WTC11 (cell line): ENCODE measurements at regions of chr12 and their contacts with region 1.

Region 1: GRCh38 chr12:50038336-50038735 is 13.0 kb upstream of the RACGAP1 start:
- DNase-seq: no peak
- ATAC-seq: no peak
- H3K4me3 Mint-ChIP-seq: no peak overlapping the region
- H3K27ac Mint-ChIP-seq: no peak overlapping the region
- H3K4me1 Mint-ChIP-seq: peaks cover 4% of the 10 kb centered on the region
- H3K27me3 Mint-ChIP-seq: peaks cover 7% of the 10 kb centered on the region; the same call in 1 of the 2 replicates
- CTCF ChIP-seq: no peak

Region 2: GRCh38 chr12:49609746-49610089 is 428.6 kb before region 1 on chr12:
- CTCF ChIA-PET with region 1: no interaction called
- POLR2A ChIA-PET with region 1: no interaction called
- DNase-seq: no peak
- ATAC-seq: peak; percentile 44
- H3K4me3 Mint-ChIP-seq: no peak overlapping the region
- H3K27ac Mint-ChIP-seq: no peak overlapping the region
- H3K4me1 Mint-ChIP-seq: 0 out of 2 replicates have a peak, but pooled peaks cover 2% of the 10 kb centered on the region
- H3K27me3 Mint-ChIP-seq: peaks cover 17% of the 10 kb centered on the region
- CTCF ChIP-seq: no peak

Region 3: GRCh38 chr12:49873361-49873934 is 164.9 kb before region 1 on chr12:
- CTCF ChIA-PET with region 1: no interaction called
- POLR2A ChIA-PET with region 1: no interaction called
- DNase-seq: no peak
- ATAC-seq: no peak
- H3K4me3 Mint-ChIP-seq: no peak overlapping the region
- H3K27ac Mint-ChIP-seq: no peak overlapping the region
- H3K4me1 Mint-ChIP-seq: no peaks in the 10 kb centered on the region
- H3K27me3 Mint-ChIP-seq: no peaks in the 10 kb centered on the region; the same call in 1 of the 2 replicates
- CTCF ChIP-seq: no peak

Region 4: GRCh38 chr12:49888461-49889151 is 149.7 kb before region 1 on chr12:
- CTCF ChIA-PET with region 1: no interaction called
- POLR2A ChIA-PET with region 1: no interaction called
- DNase-seq: no peak
- ATAC-seq: no peak
- H3K4me3 Mint-ChIP-seq: no peak overlapping the region
- H3K27ac Mint-ChIP-seq: no peak overlapping the region
- H3K4me1 Mint-ChIP-seq: peaks cover 30% of the 10 kb centered on the region
- H3K27me3 Mint-ChIP-seq: no peaks in the 10 kb centered on the region; the same call in 1 of the 2 replicates
- CTCF ChIP-seq: no peak

Region 5: GRCh38 chr12:49983892-49984291 is 54.4 kb before region 1 on chr12:
- CTCF ChIA-PET with region 1: interaction called, 24 read pairs
- POLR2A ChIA-PET with region 1: no interaction called
- DNase-seq: no peak
- ATAC-seq: no peak
- H3K4me3 Mint-ChIP-seq: no peak overlapping the region
- H3K27ac Mint-ChIP-seq: no peak overlapping the region
- H3K4me1 Mint-ChIP-seq: peaks cover 26% of the 10 kb centered on the region
- H3K27me3 Mint-ChIP-seq: no peaks in the 10 kb centered on the region
- CTCF ChIP-seq: no peak

Region 6: DNA sequence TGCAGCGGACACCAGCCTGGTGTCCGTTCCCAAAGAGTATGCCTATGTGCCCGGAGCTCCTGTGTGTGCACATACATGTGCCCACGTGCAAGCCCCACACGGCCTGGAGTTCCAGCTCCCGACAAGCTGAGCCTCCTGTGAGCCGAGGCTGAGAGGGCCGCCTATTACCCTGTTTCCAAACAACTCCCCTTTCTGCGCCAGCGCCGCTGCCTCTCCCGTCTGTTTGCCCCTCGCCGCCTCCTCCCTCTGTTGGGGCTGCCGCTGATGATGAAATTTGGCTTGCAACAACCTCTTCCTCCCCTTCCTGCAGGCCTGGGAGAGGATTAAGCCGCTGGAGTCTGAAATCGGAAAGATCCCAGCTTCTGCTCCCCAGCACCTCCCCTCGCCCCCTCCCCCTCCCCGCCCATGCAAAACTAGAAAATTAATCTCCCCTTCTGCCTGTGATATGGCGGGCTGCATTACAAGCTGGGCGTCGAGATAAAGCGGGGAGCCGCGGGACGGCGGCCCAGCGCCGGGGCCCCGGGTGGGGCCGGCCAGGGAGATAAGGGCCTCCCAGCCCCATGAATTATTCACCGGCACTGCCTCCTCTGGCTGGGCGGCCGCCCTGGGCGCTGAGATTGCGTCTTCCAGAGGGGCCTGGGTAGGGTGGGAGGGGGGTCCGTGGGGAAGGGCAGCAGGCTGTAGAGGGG is 12.2 kb after region 1 on chr12:
- CTCF ChIA-PET with region 1: interaction called, 120 read pairs
- POLR2A ChIA-PET with region 1: interaction called, 4 read pairs
- DNase-seq: peak; percentile 65
- ATAC-seq: peak; percentile 52
- H3K4me3 Mint-ChIP-seq: peak overlapping the region; percentile 68
- H3K27ac Mint-ChIP-seq: no peak overlapping the region
- H3K4me1 Mint-ChIP-seq: peaks cover 16% of the 10 kb centered on the region
- H3K27me3 Mint-ChIP-seq: peaks cover 85% of the 10 kb centered on the region
- CTCF ChIP-seq: no peak

Region 7: DNA sequence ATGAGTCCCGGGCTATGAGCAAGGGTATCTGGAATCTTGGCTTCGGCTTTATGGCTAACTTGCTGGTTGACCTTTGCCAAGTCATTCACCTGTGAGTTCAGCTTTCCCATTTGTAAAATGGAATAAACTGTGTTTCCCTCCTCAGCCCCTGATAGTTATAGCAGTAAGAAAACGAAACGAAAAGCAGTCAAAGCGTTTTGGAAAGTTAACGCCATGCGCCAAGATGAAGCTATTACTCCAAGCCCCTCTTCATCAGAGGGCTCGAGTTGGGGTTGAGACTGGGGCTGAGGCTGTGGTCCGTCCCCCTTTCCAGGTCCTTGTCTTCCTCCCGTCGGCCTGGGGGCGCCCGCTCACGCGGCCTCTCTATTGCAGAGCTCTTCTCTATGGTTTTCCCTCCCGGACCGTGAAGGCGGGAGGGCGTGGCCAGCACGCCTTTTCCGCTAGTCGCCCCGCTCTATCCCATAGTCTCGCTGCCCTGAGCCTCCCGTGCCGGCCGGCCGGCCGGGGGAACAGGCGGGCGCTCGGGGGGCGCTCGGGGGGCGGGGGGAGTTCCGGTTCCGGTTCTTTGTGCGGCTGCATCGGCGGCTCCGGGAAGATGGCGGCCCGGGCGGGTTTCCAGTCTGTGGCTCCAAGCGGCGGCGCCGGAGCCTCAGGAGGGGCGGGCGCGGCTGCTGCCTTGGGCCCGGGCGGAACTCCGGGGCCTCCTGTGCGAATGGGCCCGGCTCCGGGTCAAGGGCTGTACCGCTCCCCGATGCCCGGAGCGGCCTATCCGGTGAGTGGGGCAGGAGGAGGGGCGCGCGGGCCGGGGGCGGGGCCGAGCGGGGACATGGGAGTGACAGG is 46.7 kb after region 1 on chr12 and contains the start of gene SMARCD1:
- CTCF ChIA-PET with region 1: interaction called, 18 read pairs
- POLR2A ChIA-PET with region 1: no interaction called
- DNase-seq: peak; percentile 96
- ATAC-seq: peak; percentile 93
- H3K4me3 Mint-ChIP-seq: peak within 1 kb of the TSS; percentile 89
- H3K27ac Mint-ChIP-seq: peak within 1 kb of the TSS; percentile 94
- H3K4me1 Mint-ChIP-seq: peaks cover 24% of the 10 kb centered on the region
- H3K27me3 Mint-ChIP-seq: peaks cover 26% of the 10 kb centered on the region
- CTCF ChIP-seq: no peak
- total RNA-seq, gene SMARCD1: 150 to 165 TPM (median 152 TPM) in 3 replicates